ENCODE measurements at regions of chr2 and their contacts with region 1.

Region 1: DNA sequence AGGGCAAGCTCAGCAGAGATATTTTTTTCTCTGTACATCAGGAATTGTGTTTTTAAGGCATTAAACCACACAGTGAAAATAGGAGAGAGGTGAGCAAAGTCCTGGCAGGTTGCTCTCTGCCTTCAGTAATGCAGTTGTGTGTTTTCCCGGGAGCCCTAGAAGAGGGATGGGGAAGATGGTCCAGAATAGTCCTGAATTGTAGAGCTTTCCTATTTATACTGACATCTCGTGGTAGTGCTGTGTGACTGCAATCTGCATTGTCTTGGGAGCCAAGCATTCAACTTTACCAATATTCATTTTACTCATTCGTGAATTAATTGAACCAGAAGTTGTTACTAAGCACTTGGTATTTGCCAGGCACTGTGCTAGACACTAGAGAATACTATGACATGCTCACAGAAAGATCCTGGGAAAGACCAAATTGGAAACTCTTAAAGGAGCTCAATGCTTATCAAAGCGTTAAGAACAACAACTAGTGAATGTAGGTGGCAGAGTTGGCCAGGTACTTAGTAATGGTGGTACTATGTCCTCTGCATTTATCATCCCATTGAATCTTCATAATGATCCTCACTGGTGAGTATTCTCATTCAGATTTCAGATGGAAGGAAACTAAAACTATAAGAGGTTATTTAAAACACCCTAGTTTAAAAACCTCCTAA is 214.6 kb downstream of the TRIB2 start:
- DNase-seq: no peak
- H3K4me3 ChIP-seq: no peak overlapping the region
- H3K27ac ChIP-seq: no peak overlapping the region
- H3K4me1 ChIP-seq: peaks cover 0 to 16% (median 6%) of the 10 kb centered on the region in 4 donors
- H3K27me3 ChIP-seq: no peaks in the 10 kb centered on the region
- CTCF ChIP-seq: peak; percentile 88 to 97 (median 93)
- EP300 ChIP-seq: no peak
- POLR2A ChIP-seq: no peak

Region 2: DNA sequence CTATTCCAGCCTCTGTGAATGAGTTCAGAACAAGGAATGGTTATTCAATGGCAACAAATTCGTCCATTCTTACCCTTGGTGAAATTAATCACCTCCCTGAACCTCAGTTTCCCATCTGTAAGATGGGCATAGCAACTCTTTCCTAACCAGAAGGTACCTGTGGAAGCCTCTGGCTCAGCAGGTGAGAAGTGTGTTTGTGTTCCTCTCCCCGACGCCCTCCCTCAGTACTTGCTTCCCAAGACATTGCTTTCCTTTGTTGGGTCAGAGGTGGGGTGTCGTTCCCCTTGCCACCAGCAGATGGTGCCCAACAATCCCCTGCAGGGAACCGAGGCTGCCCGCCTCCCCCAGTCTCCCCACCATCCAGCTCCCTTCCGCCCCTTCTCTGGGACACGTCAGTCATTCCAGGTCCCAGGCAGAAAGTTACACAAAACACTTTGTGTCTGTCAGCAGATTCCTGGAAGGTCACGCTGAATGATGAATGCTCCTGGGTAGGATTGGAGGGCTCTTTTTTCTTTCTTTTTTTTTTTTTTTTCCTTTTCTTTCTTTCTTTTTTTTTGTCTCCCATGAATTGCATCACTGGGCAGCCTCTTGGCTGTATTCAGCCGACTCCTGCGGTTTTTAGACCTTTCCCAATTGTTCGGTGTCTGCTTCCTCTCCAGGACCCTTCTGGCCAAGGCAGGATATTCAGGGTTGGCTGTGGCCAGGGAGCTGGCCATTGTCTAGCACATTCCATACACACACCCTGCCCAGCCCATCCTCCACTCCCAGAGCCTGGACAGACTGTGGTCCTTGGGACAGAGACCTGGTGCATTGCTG is 1067.6 kb before region 1 on chr2:
- intact Hi-C with region 1: loop called (anchors 5 kb)
- DNase-seq: peak; percentile 94
- H3K4me3 ChIP-seq: peak overlapping the region in 3 of 4 donors; percentile 10 to 29 (median 21)
- H3K27ac ChIP-seq: peak overlapping the region; percentile 13 to 42 (median 34)
- H3K4me1 ChIP-seq: peaks cover 13 to 19% (median 15%) of the 10 kb centered on the region in 4 donors
- H3K27me3 ChIP-seq: no peaks in the 10 kb centered on the region
- CTCF ChIP-seq: peak in 2 of 3 experiments; percentile 92 to 97
- EP300 ChIP-seq: no peak
- POLR2A ChIP-seq: no peak

Region 3: DNA sequence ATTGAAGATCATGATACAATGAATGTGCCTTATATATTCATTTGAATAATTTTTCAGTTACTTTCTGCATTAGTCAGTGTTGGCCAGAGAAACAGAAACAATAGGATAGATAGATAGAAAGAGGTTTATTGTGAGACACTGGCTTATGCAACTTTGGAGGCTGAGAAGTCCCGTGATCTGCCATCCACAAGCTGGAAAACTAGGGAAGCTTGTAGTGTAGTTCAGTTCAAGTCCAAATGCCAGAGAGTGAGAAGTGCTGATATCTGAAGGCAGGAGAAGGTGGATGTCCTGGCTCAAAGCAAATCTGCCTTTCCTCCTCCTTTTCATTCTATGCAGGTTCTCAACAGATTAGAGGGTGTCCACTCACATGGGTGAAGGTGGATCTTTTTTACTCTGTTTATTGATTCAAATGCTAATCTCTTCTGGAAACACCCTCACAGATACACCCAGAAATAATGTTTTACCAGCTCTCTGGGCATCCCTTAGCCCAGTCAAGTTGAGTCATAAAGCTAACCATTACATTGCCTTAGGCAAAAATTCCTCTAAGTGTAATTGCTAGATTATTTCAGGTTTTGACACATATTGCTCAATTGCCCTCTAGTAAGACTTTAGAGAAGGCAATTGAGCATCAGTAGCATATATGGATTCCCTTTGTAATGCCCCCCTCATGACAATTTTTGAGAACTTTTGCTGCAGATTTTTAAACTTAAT is 843.5 kb before region 1 on chr2:
- intact Hi-C with region 1: no loop called
- DNase-seq: no peak
- H3K4me3 ChIP-seq: no peak overlapping the region
- H3K27ac ChIP-seq: no peak overlapping the region
- H3K4me1 ChIP-seq: no peaks in the 10 kb centered on the region
- H3K27me3 ChIP-seq: no peaks in the 10 kb centered on the region
- CTCF ChIP-seq: no peak
- EP300 ChIP-seq: no peak
- POLR2A ChIP-seq: no peak

Region 4: GRCh38 chr2:12416600-12416999 is 514.7 kb before region 1 on chr2:
- intact Hi-C with region 1: loop called (anchors 10 kb)
- DNase-seq: no peak
- H3K4me3 ChIP-seq: no peak overlapping the region
- H3K27ac ChIP-seq: no peak overlapping the region
- H3K4me1 ChIP-seq: peaks cover 0 to 12% (median 0%) of the 10 kb centered on the region in 4 donors
- H3K27me3 ChIP-seq: no peaks in the 10 kb centered on the region
- CTCF ChIP-seq: peak in 2 of 3 experiments; percentile 35 to 54
- EP300 ChIP-seq: no peak
- POLR2A ChIP-seq: no peak

Region 5: DNA sequence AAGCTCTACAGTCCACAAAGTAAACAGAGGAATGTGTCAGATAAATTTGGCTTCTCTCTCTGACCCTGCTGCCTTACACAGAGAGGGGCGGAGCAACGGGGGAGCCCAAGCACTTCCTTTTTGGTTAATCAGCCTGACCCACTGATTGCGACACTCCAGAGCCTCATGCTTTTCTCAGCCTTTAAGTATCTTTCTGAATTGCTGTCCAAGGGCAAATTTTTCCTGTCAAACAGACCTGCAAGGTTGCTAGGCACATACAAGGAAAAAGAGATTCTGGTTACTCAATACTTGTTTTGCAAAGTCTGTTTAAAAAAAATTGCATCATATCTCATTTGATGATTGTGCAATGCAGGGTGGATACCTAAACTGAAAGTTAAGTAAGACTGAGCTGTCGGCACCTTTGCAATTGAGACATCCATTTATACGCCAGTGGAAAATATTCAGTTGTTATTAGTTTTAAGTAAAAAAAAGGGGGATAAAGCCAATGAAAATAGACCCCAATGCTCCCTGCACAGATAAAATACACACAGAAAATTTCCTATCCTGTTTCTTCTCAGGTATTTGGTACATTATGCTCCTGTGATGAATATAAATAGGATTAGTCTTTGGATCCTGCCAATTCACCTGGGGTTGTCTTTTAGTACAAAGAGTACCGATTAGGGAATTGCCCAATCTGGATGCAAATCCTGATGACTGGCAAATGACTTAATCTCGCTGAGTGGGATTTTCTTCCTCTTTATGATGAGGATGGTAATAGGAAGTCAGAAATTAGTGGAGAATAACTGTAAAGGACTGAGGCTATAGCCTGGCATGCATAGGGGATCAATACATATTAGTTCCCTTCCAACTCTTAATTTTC is 474.8 kb before region 1 on chr2:
- intact Hi-C with region 1: loop called (anchors 10 kb)
- DNase-seq: peak; percentile 97
- H3K4me3 ChIP-seq: peak overlapping the region in 3 of 4 donors; percentile 5 to 28 (median 18)
- H3K27ac ChIP-seq: peak overlapping the region; percentile 67 to 78 (median 76)
- H3K4me1 ChIP-seq: peaks cover 21 to 62% (median 26%) of the 10 kb centered on the region in 4 donors
- H3K27me3 ChIP-seq: no peaks in the 10 kb centered on the region
- CTCF ChIP-seq: peak in 1 of 3 experiments; percentile 10
- EP300 ChIP-seq: peak; percentile 51
- POLR2A ChIP-seq: no peak

Region 6: GRCh38 chr2:12694990-12695774 is 236.1 kb before region 1 on chr2:
- intact Hi-C with region 1: no loop called
- DNase-seq: peak; percentile 21
- H3K4me3 ChIP-seq: no peak overlapping the region
- H3K27ac ChIP-seq: no peak overlapping the region
- H3K4me1 ChIP-seq: no peaks in the 10 kb centered on the region
- H3K27me3 ChIP-seq: no peaks in the 10 kb centered on the region
- CTCF ChIP-seq: no peak
- EP300 ChIP-seq: no peak
- POLR2A ChIP-seq: no peak

Region 7: DNA sequence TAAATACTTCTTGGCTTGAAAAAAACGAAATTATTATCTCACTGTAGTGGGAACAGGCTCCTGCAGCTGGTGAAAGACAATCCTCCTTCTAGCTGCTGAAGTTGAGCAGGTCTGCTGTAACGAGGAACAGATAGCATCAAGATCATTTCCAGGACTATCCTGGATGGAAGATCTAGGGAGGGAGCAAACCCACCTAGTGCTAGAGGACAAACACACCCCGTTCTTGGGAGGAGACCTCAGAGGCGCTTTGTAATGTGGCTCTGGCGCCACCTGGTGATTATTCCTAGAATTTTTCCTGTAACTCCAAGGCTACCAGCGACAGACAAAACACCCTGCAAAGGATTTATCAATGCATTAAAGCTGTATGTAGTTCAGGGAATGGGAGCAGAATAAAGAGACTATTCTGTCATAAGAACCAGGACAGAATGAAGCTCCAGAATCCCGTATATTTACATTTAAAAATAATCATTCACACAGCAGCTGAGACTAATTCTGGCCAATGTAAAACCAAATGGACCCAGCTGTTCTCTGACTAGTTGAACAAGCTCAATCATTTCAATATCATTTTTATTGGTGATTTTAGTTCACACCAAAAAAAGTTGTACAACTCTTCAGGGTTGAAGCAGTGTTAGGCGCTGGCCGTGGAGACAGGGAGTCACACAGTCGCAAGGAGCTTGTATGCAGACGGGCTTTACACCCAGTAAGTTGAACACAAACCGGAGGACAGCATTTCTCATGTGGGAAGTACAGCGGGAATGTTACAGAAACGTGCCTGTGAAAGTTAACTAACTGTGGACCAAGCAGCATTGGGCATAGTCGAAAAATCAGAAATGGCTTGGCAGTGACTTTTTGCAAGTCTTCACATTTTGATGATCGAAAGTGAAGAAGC is 75.8 kb after region 1 on chr2:
- intact Hi-C with region 1: loop called (anchors 10 kb)
- DNase-seq: no peak
- H3K4me3 ChIP-seq: peak overlapping the region in 2 of 4 donors; percentile 25 to 38
- H3K27ac ChIP-seq: no peak overlapping the region
- H3K4me1 ChIP-seq: peaks cover 6 to 23% (median 21%) of the 10 kb centered on the region in 4 donors
- H3K27me3 ChIP-seq: no peaks in the 10 kb centered on the region
- CTCF ChIP-seq: peak; percentile 81 to 94 (median 85)
- EP300 ChIP-seq: no peak
- POLR2A ChIP-seq: no peak

Measured in esophagus muscularis mucosa (tissue), 4 donors.